Common myeloid progenitor, CD34-positive (primary cell): ENCODE measurements at regions of chr5 and their contacts with region 1.

Region 1: DNA sequence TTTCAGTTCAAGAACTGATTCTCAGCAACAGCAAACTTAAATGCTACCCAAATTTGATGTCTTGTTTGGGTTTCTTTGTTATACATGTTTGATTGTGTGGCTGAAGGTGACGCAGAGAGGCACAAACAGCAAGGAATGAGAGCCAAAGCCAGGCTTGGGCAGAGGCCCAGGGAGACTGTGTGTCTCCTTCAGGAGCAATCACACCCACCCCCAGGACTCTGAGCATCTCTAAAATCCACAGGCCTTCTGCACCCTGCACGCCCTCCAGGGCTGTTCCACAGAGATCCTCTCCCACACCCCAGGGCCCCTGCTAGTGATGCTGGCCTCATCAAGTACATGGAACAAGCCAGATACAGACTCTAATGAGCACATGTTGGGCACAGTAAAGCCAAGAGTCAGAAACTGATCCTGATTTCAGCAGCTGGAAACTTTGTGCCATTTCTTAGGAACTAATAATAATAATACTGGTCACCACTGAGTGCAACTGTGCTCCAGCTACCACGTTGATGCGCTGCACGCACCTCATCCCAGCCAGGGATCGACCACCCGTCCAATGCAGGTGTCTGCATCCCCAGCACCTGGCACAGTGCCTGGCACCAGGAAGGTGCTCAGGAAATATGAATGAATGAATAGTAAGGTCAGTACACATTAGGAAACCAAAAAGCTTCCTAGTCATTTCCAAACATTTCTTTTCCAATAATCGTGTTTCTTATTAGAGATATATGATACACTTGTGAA is 54.6 kb upstream of the TCF7 start:
- DNase-seq: no peak
- H3K4me3 ChIP-seq: no peak overlapping the region
- H3K27ac ChIP-seq: no peak overlapping the region
- H3K4me1 ChIP-seq: peaks cover 0 to 2% (median 0%) of the 10 kb centered on the region in 4 experiments
- H3K27me3 ChIP-seq: no peaks in the 10 kb centered on the region

Region 2: GRCh38 chr5:134046801-134047686 is 12.9 kb before region 1 on chr5:
- CTCF ChIA-PET with region 1: interaction called, 22 read pairs
- POLR2A ChIA-PET with region 1: no interaction called
- DNase-seq: no peak
- H3K4me3 ChIP-seq: no peak overlapping the region
- H3K27ac ChIP-seq: no peak overlapping the region
- H3K4me1 ChIP-seq: no peaks in the 10 kb centered on the region
- H3K27me3 ChIP-seq: peaks cover 0 to 2% (median 0%) of the 10 kb centered on the region in 5 experiments

Region 3: GRCh38 chr5:134547579-134547978 is 487.7 kb after region 1 on chr5:
- CTCF ChIA-PET with region 1: no interaction called
- POLR2A ChIA-PET with region 1: no interaction called
- DNase-seq: no peak
- H3K4me3 ChIP-seq: no peak overlapping the region
- H3K27ac ChIP-seq: no peak overlapping the region
- H3K4me1 ChIP-seq: peaks cover 17 to 61% (median 39%) of the 10 kb centered on the region in 4 experiments
- H3K27me3 ChIP-seq: no peaks in the 10 kb centered on the region